GM12878 (cell line): ENCODE measurements at regions of chr13 and their contacts with region 1.

Region 1: GRCh38 chr13:87089391-87089790 is 581.8 kb upstream of the SLITRK5 start:
- DNase-seq: no peak
- ATAC-seq: no peak
- H3K4me3 ChIP-seq: no peak overlapping the region
- H3K27ac ChIP-seq: no peak overlapping the region
- H3K4me1 ChIP-seq: no peaks in the 10 kb centered on the region
- H3K27me3 ChIP-seq: no peaks in the 10 kb centered on the region
- CTCF ChIP-seq: no peak
- EP300 ChIP-seq: no peak
- POLR2A ChIP-seq: no peak
- RAD21 ChIP-seq: no peak

Region 2: GRCh38 chr13:86870444-86870843 is 218.9 kb before region 1 on chr13:
- CTCF ChIA-PET with region 1: no interaction called
- POLR2A ChIA-PET with region 1: no interaction called
- RAD21 ChIA-PET with region 1: no interaction called
- SMC1A ChIA-PET with region 1: no interaction called
- in situ Hi-C with region 1: no loop called
- intact Hi-C with region 1: loop called (anchors 10 kb)
- DNase-seq: no peak
- ATAC-seq: no peak
- H3K4me3 ChIP-seq: no peak overlapping the region
- H3K27ac ChIP-seq: no peak overlapping the region
- H3K4me1 ChIP-seq: no peaks in the 10 kb centered on the region
- H3K27me3 ChIP-seq: no peaks in the 10 kb centered on the region
- CTCF ChIP-seq: peak; percentile 35 to 50 (median 37); a peak in 5 of 6 replicates
- EP300 ChIP-seq: no peak
- POLR2A ChIP-seq: no peak
- RAD21 ChIP-seq: peak; percentile 57

Region 3: DNA sequence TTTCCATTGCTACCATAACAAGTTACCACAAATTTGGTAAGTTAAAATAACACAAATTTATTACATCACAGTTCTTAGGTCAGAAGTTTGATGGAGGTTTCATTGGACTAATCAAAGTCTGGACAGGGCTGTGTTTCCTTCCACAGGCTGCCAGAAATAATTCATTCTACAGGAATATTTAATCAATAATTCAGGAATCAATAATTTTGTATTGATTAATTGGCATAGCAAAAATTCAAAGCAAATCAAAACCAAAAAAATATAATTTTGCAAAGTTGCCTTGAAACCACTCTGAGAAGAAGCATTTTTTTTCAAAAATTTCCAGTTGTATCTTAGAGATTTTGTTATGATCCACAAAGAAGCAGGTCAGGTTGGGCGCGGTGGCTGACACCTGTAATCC is 17.5 kb before region 1 on chr13:
- CTCF ChIA-PET with region 1: no interaction called
- POLR2A ChIA-PET with region 1: no interaction called
- RAD21 ChIA-PET with region 1: no interaction called
- SMC1A ChIA-PET with region 1: no interaction called
- in situ Hi-C with region 1: no loop called
- intact Hi-C with region 1: no loop called
- DNase-seq: no peak
- ATAC-seq: no peak
- H3K4me3 ChIP-seq: no peak overlapping the region
- H3K27ac ChIP-seq: no peak overlapping the region
- H3K4me1 ChIP-seq: no peaks in the 10 kb centered on the region
- H3K27me3 ChIP-seq: no peaks in the 10 kb centered on the region
- CTCF ChIP-seq: no peak
- EP300 ChIP-seq: no peak
- POLR2A ChIP-seq: no peak
- RAD21 ChIP-seq: no peak